Activated naive CD4-positive, alpha-beta T cell treated with anti-CD3 and anti-CD28 coated beads for 36 hours (primary cell): ENCODE measurements at regions of chr4 and their contacts with region 1.

Region 1: DNA sequence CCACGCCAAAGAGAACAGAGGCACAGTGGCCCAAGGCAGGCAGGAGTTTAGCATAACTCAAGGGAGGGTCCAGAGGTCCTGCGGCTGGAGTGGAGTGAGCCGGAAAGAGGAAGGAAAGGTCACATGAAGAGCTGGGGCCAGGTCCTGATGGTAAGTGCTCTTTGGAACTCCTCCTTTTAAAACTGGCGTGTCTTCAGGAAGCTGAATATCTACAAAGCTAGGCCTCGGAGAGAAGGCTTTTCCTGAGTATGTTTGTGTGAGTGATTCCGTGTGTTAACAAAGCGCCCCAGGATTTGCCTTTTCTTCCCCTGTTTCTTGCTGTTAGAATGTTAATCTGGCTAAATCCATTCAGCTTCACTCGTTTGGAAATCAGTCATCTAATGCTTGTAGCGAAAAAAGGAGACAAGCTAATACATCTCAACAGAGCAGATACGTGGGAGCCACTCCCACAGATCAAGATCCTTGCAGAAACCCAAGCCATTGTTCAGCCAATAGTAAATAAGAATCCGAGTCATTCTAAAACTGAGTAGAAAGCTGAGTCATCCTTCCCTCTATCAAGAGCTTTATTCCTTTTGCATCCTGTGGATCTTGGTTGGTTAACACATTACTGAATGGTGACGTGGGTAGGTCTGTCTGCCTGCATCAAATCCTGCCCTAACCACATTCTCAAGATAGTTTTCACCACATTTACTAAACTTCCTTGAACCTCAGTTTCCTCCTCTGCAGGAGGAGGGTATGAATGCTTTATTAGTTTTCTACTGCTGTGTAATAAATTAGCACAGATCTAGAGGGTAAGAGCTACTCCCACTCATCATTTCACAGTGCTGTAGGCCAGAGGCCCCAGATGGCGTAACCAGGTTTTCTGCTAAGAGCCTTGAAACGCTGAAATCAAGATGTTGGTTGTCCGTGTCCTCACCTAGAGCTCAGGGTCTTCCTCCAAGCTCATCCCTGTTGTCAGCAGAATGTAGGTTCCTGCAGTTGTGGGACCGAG is 43.2 kb upstream of the RBM47 start:
- DNase-seq: peak; percentile 67
- H3K4me3 Mint-ChIP-seq: peak overlapping the region; percentile 32
- H3K27ac Mint-ChIP-seq: peak overlapping the region; percentile 86
- H3K4me1 Mint-ChIP-seq: peaks cover 37% of the 10 kb centered on the region
- H3K27me3 Mint-ChIP-seq: no peaks in the 10 kb centered on the region

Region 2: DNA sequence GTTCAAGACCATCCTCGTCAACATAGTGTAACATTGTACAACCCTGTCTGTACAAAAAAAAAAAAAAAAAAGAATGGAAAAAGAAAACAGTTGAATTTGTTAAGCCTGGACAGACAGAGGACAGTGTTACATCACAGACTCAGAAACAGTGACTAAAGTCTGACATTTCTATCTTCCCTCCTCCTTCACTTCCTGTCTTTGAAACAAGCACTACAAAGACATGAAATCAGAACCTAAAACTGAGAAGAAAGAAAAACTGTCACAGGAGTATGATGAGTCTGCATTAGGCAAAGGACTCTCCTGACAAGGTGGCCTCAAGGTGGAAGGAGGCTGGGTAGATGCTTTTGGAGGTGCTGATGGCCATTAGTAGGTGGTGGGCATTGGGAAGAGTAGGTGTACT is 169.9 kb before region 1 on chr4:
- CTCF ChIA-PET with region 1: no interaction called
- intact Hi-C with region 1: loop called (anchors 5 kb)
- DNase-seq: peak; percentile 9
- H3K4me3 Mint-ChIP-seq: no peak overlapping the region
- H3K27ac Mint-ChIP-seq: peak overlapping the region; percentile 71
- H3K4me1 Mint-ChIP-seq: peaks cover 21% of the 10 kb centered on the region
- H3K27me3 Mint-ChIP-seq: no peaks in the 10 kb centered on the region

Region 3: GRCh38 chr4:40576631-40577480 is 96.0 kb before region 1 on chr4:
- CTCF ChIA-PET with region 1: no interaction called
- intact Hi-C with region 1: no loop called
- DNase-seq: peak; percentile 22
- H3K4me3 Mint-ChIP-seq: no peak overlapping the region
- H3K27ac Mint-ChIP-seq: no peak overlapping the region
- H3K4me1 Mint-ChIP-seq: peaks cover 18% of the 10 kb centered on the region
- H3K27me3 Mint-ChIP-seq: no peaks in the 10 kb centered on the region

Region 4: GRCh38 chr4:40621592-40622512 is 51.0 kb before region 1 on chr4:
- CTCF ChIA-PET with region 1: no interaction called
- intact Hi-C with region 1: loop called (anchors 2 kb)
- DNase-seq: peak; percentile 57
- H3K4me3 Mint-ChIP-seq: no peak overlapping the region
- H3K27ac Mint-ChIP-seq: no peak overlapping the region
- H3K4me1 Mint-ChIP-seq: peaks cover 15% of the 10 kb centered on the region
- H3K27me3 Mint-ChIP-seq: peaks cover 8% of the 10 kb centered on the region

Region 5: GRCh38 chr4:40699648-40700047 is 26.8 kb after region 1 on chr4:
- CTCF ChIA-PET with region 1: interaction called, 4 read pairs
- intact Hi-C with region 1: loop called (anchors 1 kb)
- DNase-seq: no peak
- H3K4me3 Mint-ChIP-seq: no peak overlapping the region
- H3K27ac Mint-ChIP-seq: no peak overlapping the region
- H3K4me1 Mint-ChIP-seq: peaks cover 17% of the 10 kb centered on the region
- H3K27me3 Mint-ChIP-seq: no peaks in the 10 kb centered on the region